Naive thymus-derived CD8-positive, alpha-beta T cell (primary cell): ENCODE measurements at regions of chr6 and their contacts with region 1.

Region 1: DNA sequence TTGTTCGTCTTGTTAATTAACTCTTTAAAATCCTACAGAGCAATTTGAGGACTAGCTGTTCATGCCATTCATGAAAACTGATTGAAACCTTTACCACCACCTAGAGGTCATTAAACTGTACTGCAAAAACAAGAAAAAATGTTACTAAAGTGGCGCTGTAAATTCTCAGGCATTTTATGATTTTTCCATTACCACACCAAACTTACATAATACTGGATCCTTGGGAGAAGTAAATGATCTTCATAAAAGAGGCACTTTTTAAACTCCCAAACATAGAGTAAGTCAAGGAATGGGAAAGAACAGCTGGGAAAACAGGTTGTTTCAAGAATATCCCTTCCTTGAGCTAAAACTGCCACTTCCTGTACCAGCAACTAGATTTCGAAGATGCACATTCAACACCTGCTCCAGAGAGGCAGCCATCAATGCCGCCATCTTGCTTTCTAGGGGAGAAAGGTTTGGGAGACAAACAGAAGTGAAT is 54.3 kb downstream of the MYLIP start:
- DNase-seq: peak in 2 of 10 donors; percentile 54 to 57
- ATAC-seq: no peak
- H3K4me3 Mint-ChIP-seq: peak overlapping the region in 2 of 10 donors; percentile 7 to 39
- H3K27ac Mint-ChIP-seq: peak overlapping the region in 6 of 10 donors; percentile 5 to 83 (median 48)
- H3K4me1 Mint-ChIP-seq: peaks cover 13 to 45% (median 31%) of the 10 kb centered on the region in 4 donors
- H3K27me3 Mint-ChIP-seq: peaks cover 0 to 11% (median 0%) of the 10 kb centered on the region in 5 donors

Region 2: GRCh38 chr6:16128759-16129622 is 54.2 kb before region 1 on chr6 and contains the start of gene MYLIP:
- POLR2A ChIA-PET with region 1: interaction called, 81 read pairs
- DNase-seq: peak; percentile 95 to 98 (median 97)
- ATAC-seq: peak; percentile 79 to 80
- H3K4me3 Mint-ChIP-seq: peak within 1 kb of the TSS; percentile 86 to 99 (median 96)
- H3K27ac Mint-ChIP-seq: peak within 1 kb of the TSS; percentile 86 to 99 (median 96)
- H3K4me1 Mint-ChIP-seq: peaks cover 10 to 49% (median 20%) of the 10 kb centered on the region in 4 donors
- H3K27me3 Mint-ChIP-seq: no peaks in the 10 kb centered on the region
- polyA plus RNA-seq, gene MYLIP: 72.6 to 108 (median 86.8) TPM

Region 3: DNA sequence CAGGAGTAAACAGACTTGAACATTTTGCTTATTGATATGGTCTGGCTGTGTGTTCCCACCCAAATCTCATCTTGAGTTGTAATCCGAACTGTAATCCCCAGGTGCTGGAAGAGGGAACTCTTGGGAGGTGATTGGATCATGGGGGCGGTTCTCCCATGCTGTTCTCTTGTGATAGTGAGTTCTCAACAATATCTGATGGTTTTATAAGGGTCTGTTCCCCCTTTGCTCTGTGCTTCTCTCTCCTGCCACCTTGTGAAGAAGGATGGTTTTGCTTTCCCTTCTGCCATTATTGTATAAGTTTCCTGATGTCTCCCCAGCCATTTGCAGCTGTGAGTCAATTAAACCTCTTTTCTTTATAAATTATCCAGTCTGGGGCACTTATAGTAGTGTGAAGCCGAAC is 14.4 kb before region 1 on chr6:
- POLR2A ChIA-PET with region 1: no interaction called
- DNase-seq: peak in 4 of 10 donors; percentile 29 to 56 (median 40)
- ATAC-seq: peak; percentile 75 to 79
- H3K4me3 Mint-ChIP-seq: peak overlapping the region in 4 of 10 donors; percentile 3 to 48 (median 27)
- H3K27ac Mint-ChIP-seq: no peak overlapping the region
- H3K4me1 Mint-ChIP-seq: peaks cover 11 to 29% (median 26%) of the 10 kb centered on the region in 4 donors
- H3K27me3 Mint-ChIP-seq: peaks cover 0 to 4% (median 0%) of the 10 kb centered on the region in 5 donors